ENCODE measurements at regions of chr1 and their contacts with region 1.

Region 1: GRCh38 chr1:152926091-152926490 is 17.7 kb downstream of the IVL start:
- DNase-seq: no peak
- H3K4me3 ChIP-seq: no peak overlapping the region
- H3K27ac ChIP-seq: no peak overlapping the region
- H3K4me1 ChIP-seq: no peaks in the 10 kb centered on the region
- H3K27me3 ChIP-seq: no peaks in the 10 kb centered on the region
- CTCF ChIP-seq: peak in 1 of 3 experiments; percentile 26

Region 2: DNA sequence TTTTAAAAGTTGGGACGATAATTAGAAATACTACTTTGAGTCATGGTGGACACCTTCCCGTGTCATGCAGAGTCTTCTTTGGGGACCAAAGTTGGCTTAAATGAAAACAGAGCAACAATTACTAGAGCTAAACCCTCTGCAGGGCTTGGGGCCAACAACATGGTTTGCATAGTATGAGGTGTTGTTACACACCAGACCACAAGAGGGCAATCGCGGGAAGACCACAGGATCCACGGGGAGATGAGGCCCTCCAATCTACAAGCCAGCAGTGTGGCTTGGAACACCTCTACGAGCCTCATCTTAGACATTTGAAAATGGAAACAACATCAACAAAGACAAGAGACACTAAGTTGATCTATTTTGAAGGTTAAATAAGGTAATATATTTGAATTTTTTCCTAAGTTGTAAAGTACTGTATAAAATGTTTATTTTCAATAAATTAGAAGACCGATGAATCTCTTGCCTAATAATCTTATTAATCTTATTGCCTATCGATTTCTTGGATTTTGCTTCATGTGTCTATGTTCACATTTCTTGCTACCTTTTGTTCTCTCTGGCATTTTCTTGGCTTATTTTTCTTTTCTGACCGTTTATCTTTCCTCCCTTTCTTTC is 56.2 kb before region 1 on chr1:
- intact Hi-C with region 1: loop called (anchors 2 kb)
- DNase-seq: peak in 1 of 2 donors; percentile 69
- H3K4me3 ChIP-seq: no peak overlapping the region
- H3K27ac ChIP-seq: no peak overlapping the region
- H3K4me1 ChIP-seq: no peaks in the 10 kb centered on the region
- H3K27me3 ChIP-seq: no peaks in the 10 kb centered on the region
- CTCF ChIP-seq: peak; percentile 36 to 77 (median 73)

Region 3: GRCh38 chr1:153058826-153059784 is 133.0 kb after region 1 on chr1:
- intact Hi-C with region 1: no loop called
- DNase-seq: no peak
- H3K4me3 ChIP-seq: no peak overlapping the region
- H3K27ac ChIP-seq: no peak overlapping the region
- H3K4me1 ChIP-seq: no peaks in the 10 kb centered on the region
- H3K27me3 ChIP-seq: no peaks in the 10 kb centered on the region
- CTCF ChIP-seq: no peak

Region 4: DNA sequence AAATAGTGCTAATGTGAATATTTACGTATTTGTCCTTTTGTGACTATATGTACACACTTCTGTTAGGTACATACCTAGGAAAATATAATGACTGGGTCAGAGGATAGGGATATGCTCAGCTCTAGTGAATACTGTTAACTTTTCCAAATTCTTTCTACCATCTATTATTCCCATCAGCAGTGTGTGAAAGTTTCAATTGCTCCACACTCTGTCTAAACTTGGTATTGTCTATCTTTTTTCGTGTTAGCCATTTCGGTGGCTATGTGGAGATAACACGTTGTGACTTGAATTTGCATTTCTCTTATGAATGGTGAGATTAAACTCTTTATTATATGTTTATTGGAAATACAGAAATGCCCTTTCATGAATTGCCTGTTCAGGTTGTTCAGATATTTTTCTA is 254.5 kb after region 1 on chr1:
- intact Hi-C with region 1: no loop called
- DNase-seq: no peak
- H3K4me3 ChIP-seq: no peak overlapping the region
- H3K27ac ChIP-seq: no peak overlapping the region
- H3K4me1 ChIP-seq: no peaks in the 10 kb centered on the region
- H3K27me3 ChIP-seq: no peaks in the 10 kb centered on the region
- CTCF ChIP-seq: no peak